Activated CD8-positive, alpha-beta memory T cell treated with anti-CD3 and anti-CD28 coated beads, Interleukin-2, amount 10 ng/mL, durations not matched to agents 7 days and 5 days (primary cell): ENCODE measurements at regions of chr7 and their contacts with region 1.

Region 1: DNA sequence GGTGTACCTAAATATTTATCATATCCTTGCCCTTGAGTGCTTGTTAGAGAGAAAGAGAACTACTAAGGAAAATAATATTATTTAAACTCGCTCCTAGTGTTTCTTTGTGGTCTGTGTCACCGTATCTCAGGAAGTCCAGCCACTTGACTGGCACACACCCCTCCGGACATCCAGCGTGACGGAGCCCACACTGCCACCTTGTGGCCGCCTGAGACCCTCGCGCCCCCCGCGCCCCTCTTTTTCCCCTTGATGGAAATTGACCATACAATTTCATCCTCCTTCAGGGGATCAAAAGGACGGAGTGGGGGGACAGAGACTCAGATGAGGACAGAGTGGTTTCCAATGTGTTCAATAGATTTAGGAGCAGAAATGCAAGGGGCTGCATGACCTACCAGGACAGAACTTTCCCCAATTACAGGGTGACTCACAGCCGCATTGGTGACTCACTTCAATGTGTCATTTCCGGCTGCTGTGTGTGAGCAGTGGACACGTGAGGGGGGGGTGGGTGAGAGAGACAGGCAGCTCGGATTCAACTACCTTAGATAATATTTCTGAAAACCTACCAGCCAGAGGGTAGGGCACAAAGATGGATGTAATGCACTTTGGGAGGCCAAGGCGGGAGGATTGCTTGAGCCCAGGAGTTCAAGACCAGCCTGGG is 11.4 kb downstream of the SERPINE1 start:
- DNase-seq: peak; percentile 91
- ATAC-seq: peak; percentile 97
- H3K4me3 Mint-ChIP-seq: no peak overlapping the region
- H3K27ac Mint-ChIP-seq: peak overlapping the region; percentile 29
- H3K4me1 Mint-ChIP-seq: peaks cover 44% of the 10 kb centered on the region
- H3K27me3 Mint-ChIP-seq: peaks cover 45% of the 10 kb centered on the region

Region 2: GRCh38 chr7:100929780-100930135 is 208.6 kb before region 1 on chr7:
- CTCF ChIA-PET with region 1: no interaction called
- DNase-seq: no peak
- ATAC-seq: no peak
- H3K4me3 Mint-ChIP-seq: no peak overlapping the region
- H3K27ac Mint-ChIP-seq: no peak overlapping the region
- H3K4me1 Mint-ChIP-seq: no peaks in the 10 kb centered on the region
- H3K27me3 Mint-ChIP-seq: peaks cover 9% of the 10 kb centered on the region

Region 3: GRCh38 chr7:101126651-101127280 is 11.6 kb before region 1 on chr7 and contains the start of gene SERPINE1:
- CTCF ChIA-PET with region 1: interaction called, 20 read pairs
- DNase-seq: peak; percentile 86
- ATAC-seq: peak; percentile 86
- H3K4me3 Mint-ChIP-seq: peak within 1 kb of the TSS; percentile 38
- H3K27ac Mint-ChIP-seq: peak within 1 kb of the TSS; percentile 33
- H3K4me1 Mint-ChIP-seq: peaks cover 47% of the 10 kb centered on the region
- H3K27me3 Mint-ChIP-seq: peaks cover 57% of the 10 kb centered on the region
- total RNA-seq, gene SERPINE1: 0.29 to 1.2 TPM

Region 4: DNA sequence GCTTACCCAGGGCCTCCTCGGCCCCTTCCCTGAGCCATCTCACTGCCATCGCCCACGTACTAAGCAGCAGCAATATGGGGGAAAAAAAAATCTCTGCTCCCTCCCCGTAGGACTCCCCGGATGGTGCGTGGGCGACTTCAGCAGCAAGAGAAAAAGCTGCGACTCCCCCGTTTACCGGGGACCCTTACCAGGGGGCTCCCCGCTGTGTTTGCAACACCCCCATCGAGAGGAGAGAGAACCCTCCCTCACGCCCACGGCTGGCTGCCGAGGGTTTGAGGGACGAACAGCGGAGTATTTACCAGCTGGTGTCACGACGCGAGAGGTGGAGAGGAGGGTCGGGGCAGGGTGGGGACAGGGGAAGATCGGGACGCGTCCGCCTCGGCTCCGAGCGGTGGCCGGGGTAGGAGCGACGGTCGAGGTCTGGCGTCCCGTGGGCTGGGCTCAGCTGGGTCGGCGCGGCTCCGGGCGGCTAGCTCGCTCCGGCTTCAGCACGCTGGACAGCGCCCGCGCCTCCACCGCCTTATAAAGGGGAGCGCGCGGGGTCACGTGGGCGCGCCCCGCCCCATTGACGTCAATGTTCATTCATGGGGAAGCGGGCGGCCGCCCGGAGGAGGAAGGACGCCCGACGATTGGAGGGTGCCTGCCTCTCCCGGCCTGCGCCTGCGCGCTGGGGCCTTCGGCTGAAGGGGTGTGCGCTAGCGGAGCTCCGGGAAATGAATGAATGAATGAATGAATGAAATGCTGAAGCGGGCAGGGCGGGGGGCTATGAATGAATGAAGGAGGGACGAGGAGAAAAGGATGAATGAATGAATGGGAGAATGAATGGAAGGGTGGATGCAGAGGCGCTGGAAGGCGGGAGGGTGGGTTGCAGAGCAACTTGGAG is 27.0 kb after region 1 on chr7 and contains the start of gene VGF:
- CTCF ChIA-PET with region 1: interaction called, 90 read pairs
- DNase-seq: peak; percentile 95
- ATAC-seq: peak; percentile 85
- H3K4me3 Mint-ChIP-seq: peak within 1 kb of the TSS; percentile 46
- H3K27ac Mint-ChIP-seq: no peak within 1 kb of the TSS
- H3K4me1 Mint-ChIP-seq: peaks cover 38% of the 10 kb centered on the region
- H3K27me3 Mint-ChIP-seq: peaks cover 62% of the 10 kb centered on the region
- total RNA-seq, gene VGF: 0.44 to 0.66 TPM

Region 5: GRCh38 chr7:101185258-101185839 is 47.0 kb after region 1 on chr7:
- CTCF ChIA-PET with region 1: interaction called, 111 read pairs
- DNase-seq: no peak
- ATAC-seq: no peak
- H3K4me3 Mint-ChIP-seq: no peak overlapping the region
- H3K27ac Mint-ChIP-seq: no peak overlapping the region
- H3K4me1 Mint-ChIP-seq: peaks cover 3% of the 10 kb centered on the region
- H3K27me3 Mint-ChIP-seq: peaks cover 32% of the 10 kb centered on the region

Region 6: DNA sequence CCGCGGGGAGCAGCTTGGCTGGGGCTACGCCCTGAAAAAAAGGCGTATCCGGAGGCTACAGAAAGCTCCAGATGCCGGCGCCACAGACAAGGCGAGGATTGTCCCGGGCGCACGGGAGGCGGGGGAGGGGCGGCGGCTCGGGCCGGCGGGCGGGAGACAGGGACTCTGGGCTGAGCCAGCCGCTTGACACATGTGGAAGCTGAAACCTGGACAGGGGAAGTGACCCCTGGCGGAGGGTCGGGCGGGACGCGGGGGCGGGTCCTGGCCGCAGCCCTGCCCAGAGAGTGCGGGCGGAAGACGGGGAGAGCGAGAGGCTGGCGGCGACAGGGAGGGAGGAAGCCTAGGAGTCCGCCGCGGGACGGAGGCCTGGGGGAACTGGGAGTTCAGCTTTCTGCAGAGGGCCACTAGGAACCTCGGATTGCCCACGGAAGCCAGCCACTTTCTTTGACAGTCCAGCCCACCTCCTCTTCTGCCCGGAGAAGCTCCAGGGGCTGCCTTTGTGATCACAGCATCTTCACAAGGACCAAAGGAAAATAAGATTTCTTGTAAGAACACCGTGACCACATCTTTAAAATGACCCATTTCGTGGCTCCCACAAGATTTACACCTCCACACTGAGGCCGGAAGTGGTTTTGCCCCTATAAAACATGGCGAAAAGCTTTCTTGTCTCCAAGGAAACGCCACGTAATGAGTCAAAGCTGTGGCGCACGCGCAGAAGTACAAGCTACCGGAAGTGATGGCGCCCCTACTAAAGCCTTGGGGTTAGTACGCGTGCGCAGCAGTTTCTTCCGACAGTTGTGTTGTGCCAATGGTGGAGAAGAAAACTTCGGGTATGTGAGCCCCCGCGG is 79.3 kb after region 1 on chr7 and contains the starts of genes PLOD3 and ZNHIT1:
- CTCF ChIA-PET with region 1: interaction called, 12 read pairs
- DNase-seq: peak; percentile 98
- ATAC-seq: peak; percentile 74
- H3K4me3 Mint-ChIP-seq: peak within 1 kb of the TSS; percentile 93
- H3K27ac Mint-ChIP-seq: peak within 1 kb of the TSS; percentile 84
- H3K4me1 Mint-ChIP-seq: peaks cover 27% of the 10 kb centered on the region
- H3K27me3 Mint-ChIP-seq: no peaks in the 10 kb centered on the region
- total RNA-seq, gene PLOD3: 41.6 to 42.3 TPM
- total RNA-seq, gene ZNHIT1: 56.6 to 57.1 TPM

Region 7: GRCh38 chr7:101287032-101287431 is 148.7 kb after region 1 on chr7:
- CTCF ChIA-PET with region 1: interaction called, 59 read pairs
- DNase-seq: no peak
- ATAC-seq: no peak
- H3K4me3 Mint-ChIP-seq: no peak overlapping the region
- H3K27ac Mint-ChIP-seq: no peak overlapping the region
- H3K4me1 Mint-ChIP-seq: peaks cover 25% of the 10 kb centered on the region
- H3K27me3 Mint-ChIP-seq: peaks cover 22% of the 10 kb centered on the region